B cell (primary cell): ENCODE measurements at regions of chr1 and their contacts with region 1.

Region 1: DNA sequence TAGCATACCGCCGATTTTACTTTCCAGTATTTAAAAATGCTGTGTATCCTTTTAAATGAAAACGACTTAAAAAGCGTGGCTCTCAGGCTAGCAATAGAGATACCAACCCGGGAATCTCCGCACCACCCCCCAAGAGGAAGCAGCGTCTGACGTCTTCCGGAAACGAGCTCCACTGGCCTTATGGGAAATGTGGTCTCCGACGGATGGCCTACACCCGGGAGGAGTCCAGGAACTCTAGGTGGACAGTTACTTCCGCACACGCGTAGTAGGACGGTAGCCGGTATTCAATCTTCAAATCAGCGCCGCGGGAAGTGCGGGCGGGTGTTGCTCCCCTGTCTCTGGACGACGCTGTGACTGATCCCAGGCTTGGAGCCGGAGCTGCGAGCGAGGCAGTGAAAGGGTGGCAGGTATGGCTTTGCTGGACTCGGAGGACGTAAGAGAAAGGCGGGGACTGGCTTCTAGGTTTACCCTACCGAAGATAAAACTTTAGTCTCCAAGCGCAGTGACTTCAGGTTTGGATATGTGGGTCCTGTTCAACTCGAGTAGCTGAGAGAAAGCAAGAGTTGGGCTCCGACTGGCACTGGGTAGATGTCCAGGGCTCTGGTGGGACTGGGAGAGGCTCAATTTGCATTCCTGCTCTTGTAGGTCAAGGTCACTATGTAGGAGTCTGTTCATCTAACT is at the start of gene ZNF684:
- DNase-seq: peak; percentile 91
- ATAC-seq: peak; percentile 98
- H3K4me3 ChIP-seq: peak within 1 kb of the TSS; percentile 50 to 94 (median 80)
- H3K4me3 Mint-ChIP-seq: peak within 1 kb of the TSS; percentile 100
- H3K27ac ChIP-seq: peak within 1 kb of the TSS; percentile 60 to 92
- H3K27ac Mint-ChIP-seq: peak within 1 kb of the TSS; percentile 96
- H3K4me1 ChIP-seq: peaks cover 19 to 22% of the 10 kb centered on the region in 2 donors
- H3K4me1 Mint-ChIP-seq: peaks cover 26% of the 10 kb centered on the region
- H3K27me3 ChIP-seq: peaks cover 0 to 3% (median 1%) of the 10 kb centered on the region in 4 experiments
- H3K27me3 Mint-ChIP-seq: peaks cover 5% of the 10 kb centered on the region
- CTCF ChIP-seq: no peak
- total RNA-seq, gene ZNF684: 6.3 and 7.4 TPM in 2 replicates

Region 2: GRCh38 chr1:40078512-40079333 is 452.8 kb before region 1 on chr1:
- CTCF ChIA-PET with region 1: no interaction called
- POLR2A ChIA-PET with region 1: no interaction called
- intact Hi-C with region 1: no loop called
- DNase-seq: peak; percentile 74
- ATAC-seq: peak; percentile 87
- H3K4me3 ChIP-seq: no peak overlapping the region
- H3K4me3 Mint-ChIP-seq: no peak overlapping the region
- H3K27ac ChIP-seq: no peak overlapping the region
- H3K27ac Mint-ChIP-seq: no peak overlapping the region
- H3K4me1 ChIP-seq: peaks cover 10 to 21% of the 10 kb centered on the region in 2 donors
- H3K4me1 Mint-ChIP-seq: peaks cover 19% of the 10 kb centered on the region
- H3K27me3 ChIP-seq: no peaks in the 10 kb centered on the region
- H3K27me3 Mint-ChIP-seq: no peaks in the 10 kb centered on the region
- CTCF ChIP-seq: peak; percentile 93

Region 3: DNA sequence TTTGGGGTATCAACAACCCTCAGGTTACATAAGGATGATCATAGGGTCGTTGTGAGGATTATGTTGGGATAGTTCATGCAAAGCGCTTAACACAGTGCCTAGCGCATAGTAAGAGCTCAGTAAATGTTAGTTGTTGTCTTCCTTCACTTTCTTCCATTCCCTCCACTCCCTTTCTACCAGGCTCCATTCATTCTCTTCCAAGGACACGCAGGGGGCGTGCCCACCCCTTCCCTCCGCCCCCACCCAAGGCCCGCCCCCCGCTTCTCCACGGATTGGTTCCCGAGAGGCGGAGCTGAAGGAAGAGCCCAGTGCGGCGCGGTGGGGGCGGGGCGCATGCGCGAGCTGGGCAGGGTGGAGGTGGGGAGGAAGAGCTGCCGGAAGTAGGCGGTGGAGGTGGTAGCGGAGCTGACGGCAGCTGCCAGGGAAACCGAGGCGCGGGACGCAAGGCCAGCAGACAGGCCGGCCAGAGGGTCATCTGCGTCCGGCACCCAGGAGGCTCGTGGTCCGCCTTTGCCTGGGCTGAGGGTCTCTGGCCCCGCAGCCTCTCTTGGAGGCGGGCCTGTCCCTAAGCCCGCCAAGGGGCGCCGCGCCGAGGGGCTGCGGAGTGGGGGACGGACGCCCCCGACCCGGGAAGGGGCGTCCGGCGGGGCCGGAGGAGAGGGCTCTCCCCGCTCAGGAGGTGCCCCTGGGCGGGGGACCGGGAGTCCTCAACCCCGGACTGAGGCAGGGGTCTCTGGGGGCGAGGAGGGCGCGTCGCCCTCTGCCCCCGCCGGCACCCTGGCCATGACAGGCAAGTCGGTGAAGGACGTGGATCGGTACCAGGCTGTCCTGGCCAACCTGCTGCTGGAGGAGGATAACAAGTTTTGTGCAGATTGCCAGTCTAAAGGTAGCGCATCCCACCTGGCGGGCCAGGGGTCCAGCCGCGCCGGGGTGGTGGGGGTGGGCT is 157.9 kb before region 1 on chr1 and contains the start of gene SMAP2:
- CTCF ChIA-PET with region 1: no interaction called
- POLR2A ChIA-PET with region 1: no interaction called
- intact Hi-C with region 1: loop called (anchors 5 kb)
- DNase-seq: peak; percentile 95
- ATAC-seq: peak; percentile 88
- H3K4me3 ChIP-seq: peak within 1 kb of the TSS; percentile 76 to 100 (median 97)
- H3K4me3 Mint-ChIP-seq: peak within 1 kb of the TSS; percentile 96
- H3K27ac ChIP-seq: peak within 1 kb of the TSS; percentile 89 to 100
- H3K27ac Mint-ChIP-seq: peak within 1 kb of the TSS; percentile 95
- H3K4me1 ChIP-seq: peaks cover 36 to 37% of the 10 kb centered on the region in 2 donors
- H3K4me1 Mint-ChIP-seq: peaks cover 48% of the 10 kb centered on the region
- H3K27me3 ChIP-seq: no peaks in the 10 kb centered on the region
- H3K27me3 Mint-ChIP-seq: no peaks in the 10 kb centered on the region
- CTCF ChIP-seq: no peak
- total RNA-seq, gene SMAP2: 300 and 305 TPM in 2 replicates

Region 4: GRCh38 chr1:40476924-40477677 is 54.4 kb before region 1 on chr1 and contains the start of gene ZFP69:
- CTCF ChIA-PET with region 1: interaction called, 11 read pairs
- POLR2A ChIA-PET with region 1: no interaction called
- intact Hi-C with region 1: loop called (anchors 1 kb)
- DNase-seq: peak; percentile 83
- ATAC-seq: peak; percentile 95
- H3K4me3 ChIP-seq: peak within 1 kb of the TSS; percentile 58 to 83 (median 81)
- H3K4me3 Mint-ChIP-seq: peak within 1 kb of the TSS; percentile 93
- H3K27ac ChIP-seq: peak within 1 kb of the TSS; percentile 37 to 63
- H3K27ac Mint-ChIP-seq: peak within 1 kb of the TSS; percentile 87
- H3K4me1 ChIP-seq: peaks cover 8 to 14% of the 10 kb centered on the region in 2 donors
- H3K4me1 Mint-ChIP-seq: peaks cover 18% of the 10 kb centered on the region
- H3K27me3 ChIP-seq: no peaks in the 10 kb centered on the region
- H3K27me3 Mint-ChIP-seq: no peaks in the 10 kb centered on the region
- CTCF ChIP-seq: no peak
- total RNA-seq, gene ZFP69: 7.5 TPM in 2 replicates

Region 5: GRCh38 chr1:40709100-40709801 is 177.7 kb after region 1 on chr1:
- CTCF ChIA-PET with region 1: no interaction called
- POLR2A ChIA-PET with region 1: no interaction called
- intact Hi-C with region 1: loop called (anchors 5 kb)
- DNase-seq: peak; percentile 92
- ATAC-seq: peak; percentile 90
- H3K4me3 ChIP-seq: peak overlapping the region; percentile 55 to 88 (median 76)
- H3K4me3 Mint-ChIP-seq: peak overlapping the region; percentile 96
- H3K27ac ChIP-seq: peak overlapping the region; percentile 87 to 94
- H3K27ac Mint-ChIP-seq: peak overlapping the region; percentile 96
- H3K4me1 ChIP-seq: peaks cover 58 to 64% of the 10 kb centered on the region in 2 donors
- H3K4me1 Mint-ChIP-seq: peaks cover 74% of the 10 kb centered on the region
- H3K27me3 ChIP-seq: no peaks in the 10 kb centered on the region
- H3K27me3 Mint-ChIP-seq: no peaks in the 10 kb centered on the region
- CTCF ChIP-seq: no peak

Region 6: DNA sequence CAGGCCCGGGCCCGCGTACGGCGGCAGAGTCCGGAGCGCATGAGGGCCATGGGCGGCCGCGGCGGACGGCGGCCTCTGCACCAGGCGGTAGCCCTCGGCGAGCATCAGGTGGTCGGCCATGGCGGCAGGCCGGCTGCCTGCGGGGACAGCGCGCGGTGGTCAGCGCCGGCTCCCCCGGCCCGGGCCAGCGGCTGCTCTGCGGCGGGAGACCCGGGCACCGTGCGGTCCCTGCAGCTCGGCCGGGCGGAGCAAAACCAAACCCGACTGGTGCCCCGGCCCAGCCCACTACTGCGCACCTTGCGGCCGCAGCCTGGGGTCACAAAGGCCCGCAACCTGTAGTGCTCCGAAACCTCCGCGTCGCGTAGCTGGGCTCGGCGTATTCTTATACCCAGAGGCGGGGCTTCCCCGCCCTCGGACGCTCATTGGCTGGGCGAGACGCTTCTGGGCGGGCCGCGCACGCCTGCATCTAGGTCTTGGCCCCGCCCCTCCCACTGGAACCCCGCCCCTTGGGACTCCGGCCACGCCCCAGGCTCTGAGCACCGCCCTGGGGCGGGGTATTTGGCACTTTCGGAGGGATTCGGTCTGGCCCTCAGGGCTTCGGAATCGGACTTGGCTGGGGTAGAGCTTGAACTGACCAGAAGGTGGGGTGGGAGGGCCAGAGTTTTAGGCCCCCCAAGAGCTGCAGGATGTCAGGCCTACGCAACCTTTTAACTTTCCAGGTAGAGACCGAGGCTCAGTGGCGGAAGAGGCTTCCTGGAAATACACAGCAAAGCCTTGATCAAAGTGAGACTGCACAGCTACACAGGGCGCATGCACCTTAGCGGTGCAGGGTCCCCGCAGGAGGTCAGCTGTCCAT is 330.7 kb after region 1 on chr1 and contains the start of gene CITED4:
- CTCF ChIA-PET with region 1: no interaction called
- POLR2A ChIA-PET with region 1: no interaction called
- intact Hi-C with region 1: loop called (anchors 1 kb)
- DNase-seq: peak; percentile 96
- ATAC-seq: peak; percentile 98
- H3K4me3 ChIP-seq: peak within 1 kb of the TSS; percentile 17 to 67 (median 58)
- H3K4me3 Mint-ChIP-seq: peak within 1 kb of the TSS; percentile 98
- H3K27ac ChIP-seq: peak within 1 kb of the TSS in 1 of 2 donors; percentile 23
- H3K27ac Mint-ChIP-seq: peak within 1 kb of the TSS; percentile 88
- H3K4me1 ChIP-seq: peaks cover 11 to 14% of the 10 kb centered on the region in 2 donors
- H3K4me1 Mint-ChIP-seq: peaks cover 9% of the 10 kb centered on the region
- H3K27me3 ChIP-seq: peaks cover 0 to 28% (median 9%) of the 10 kb centered on the region in 4 experiments
- H3K27me3 Mint-ChIP-seq: peaks cover 25% of the 10 kb centered on the region
- CTCF ChIP-seq: no peak
- total RNA-seq, gene CITED4: 3.1 and 3.2 TPM in 2 replicates